ENCODE measurements at regions of chr20 and their contacts with region 1.

Region 1: GRCh38 chr20:32368925-32369324 is 10.8 kb downstream of the ASXL1 start:
- DNase-seq: peak; percentile 52
- ATAC-seq: peak; percentile 73
- H3K4me3 ChIP-seq: peak overlapping the region in 1 of 5 experiments; percentile 15
- H3K4me3 Mint-ChIP-seq: peak overlapping the region; percentile 72
- H3K27ac ChIP-seq: peak overlapping the region; percentile 41 to 44
- H3K27ac Mint-ChIP-seq: peak overlapping the region; percentile 70
- H3K4me1 ChIP-seq: peaks cover 43 to 46% of the 10 kb centered on the region in 2 donors
- H3K4me1 Mint-ChIP-seq: peaks cover 46% of the 10 kb centered on the region
- H3K27me3 ChIP-seq: no peaks in the 10 kb centered on the region
- H3K27me3 Mint-ChIP-seq: no peaks in the 10 kb centered on the region
- CTCF ChIP-seq: no peak

Region 2: GRCh38 chr20:32357869-32358631 is 10.9 kb before region 1 on chr20 and contains the start of gene ASXL1:
- CTCF ChIA-PET with region 1: no interaction called
- POLR2A ChIA-PET with region 1: interaction called, 7 read pairs
- intact Hi-C with region 1: loop called (anchors 1 kb)
- DNase-seq: peak; percentile 96
- ATAC-seq: peak; percentile 83
- H3K4me3 ChIP-seq: peak within 1 kb of the TSS; percentile 83 to 95 (median 91)
- H3K4me3 Mint-ChIP-seq: peak within 1 kb of the TSS; percentile 95
- H3K27ac ChIP-seq: peak within 1 kb of the TSS; percentile 96 to 97
- H3K27ac Mint-ChIP-seq: peak within 1 kb of the TSS; percentile 98
- H3K4me1 ChIP-seq: peaks cover 47 to 71% of the 10 kb centered on the region in 2 donors
- H3K4me1 Mint-ChIP-seq: peaks cover 71% of the 10 kb centered on the region
- H3K27me3 ChIP-seq: no peaks in the 10 kb centered on the region
- H3K27me3 Mint-ChIP-seq: no peaks in the 10 kb centered on the region
- CTCF ChIP-seq: no peak
- total RNA-seq, gene ASXL1: 180 and 183 TPM in 2 replicates

Region 3: DNA sequence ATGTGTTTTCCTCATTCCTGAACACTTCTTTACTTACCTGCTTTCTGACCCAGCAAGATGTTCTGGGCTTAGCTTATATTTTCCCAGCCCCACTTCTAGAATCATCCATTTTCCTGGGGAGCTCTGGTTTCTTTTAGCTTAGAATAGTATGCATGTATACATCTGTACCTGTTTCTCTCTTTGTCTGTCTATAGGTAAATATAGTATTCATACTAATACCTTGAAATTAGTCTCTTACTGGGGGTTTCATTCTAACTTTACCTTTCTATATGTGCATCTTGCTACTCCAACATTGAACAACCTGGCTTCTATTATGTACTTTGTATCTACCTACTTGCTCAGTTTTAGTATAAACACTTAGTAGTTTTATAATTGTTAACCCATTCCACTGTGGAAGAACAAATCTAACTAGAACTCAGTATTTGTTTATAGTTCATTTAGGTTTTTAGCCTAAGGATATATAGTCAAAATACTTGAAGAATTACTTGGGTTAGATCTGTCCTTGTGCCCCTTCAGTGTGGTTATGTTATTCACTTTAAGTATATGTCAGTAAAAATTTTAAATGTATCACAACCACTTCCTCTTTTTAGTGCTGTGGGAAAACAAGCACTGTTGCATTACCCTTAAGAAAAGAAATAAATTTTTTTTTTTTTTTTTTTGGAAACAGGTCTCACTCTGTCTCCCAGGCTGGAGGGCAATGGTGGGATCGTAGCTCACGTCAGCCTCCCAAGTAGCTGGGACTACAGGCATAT is 43.2 kb after region 1 on chr20:
- CTCF ChIA-PET with region 1: no interaction called
- POLR2A ChIA-PET with region 1: no interaction called
- intact Hi-C with region 1: loop called (anchors 5 kb)
- DNase-seq: peak; percentile 50
- ATAC-seq: peak; percentile 54
- H3K4me3 ChIP-seq: peak overlapping the region in 1 of 5 experiments; percentile 15
- H3K4me3 Mint-ChIP-seq: peak overlapping the region; percentile 21
- H3K27ac ChIP-seq: peak overlapping the region in 1 of 2 donors; percentile 48
- H3K27ac Mint-ChIP-seq: peak overlapping the region; percentile 58
- H3K4me1 ChIP-seq: peaks cover 22% of the 10 kb centered on the region in 2 donors
- H3K4me1 Mint-ChIP-seq: peaks cover 48% of the 10 kb centered on the region
- H3K27me3 ChIP-seq: no peaks in the 10 kb centered on the region
- H3K27me3 Mint-ChIP-seq: no peaks in the 10 kb centered on the region
- CTCF ChIP-seq: no peak

Measured in B cell (primary cell).